Heart right ventricle (tissue), 16 donors: ENCODE measurements at regions of chr19 and their contacts with region 1.

Region 1: GRCh38 chr19:10478903-10479384 is 24.2 kb downstream of the KEAP1 start:
- DNase-seq: peak; percentile 88 to 94
- ATAC-seq: peak; percentile 93 to 99 (median 98)
- H3K4me3 ChIP-seq: peak overlapping the region in 9 of 10 donors; percentile 38 to 57 (median 45)
- H3K27ac ChIP-seq: peak overlapping the region in 5 of 10 donors; percentile 1 to 26 (median 20)
- H3K4me1 ChIP-seq: peaks cover 0 to 20% (median 6%) of the 10 kb centered on the region in 9 donors
- H3K27me3 ChIP-seq: no peaks in the 10 kb centered on the region
- CTCF ChIP-seq: peak; percentile 78 to 94 (median 86)

Region 2: DNA sequence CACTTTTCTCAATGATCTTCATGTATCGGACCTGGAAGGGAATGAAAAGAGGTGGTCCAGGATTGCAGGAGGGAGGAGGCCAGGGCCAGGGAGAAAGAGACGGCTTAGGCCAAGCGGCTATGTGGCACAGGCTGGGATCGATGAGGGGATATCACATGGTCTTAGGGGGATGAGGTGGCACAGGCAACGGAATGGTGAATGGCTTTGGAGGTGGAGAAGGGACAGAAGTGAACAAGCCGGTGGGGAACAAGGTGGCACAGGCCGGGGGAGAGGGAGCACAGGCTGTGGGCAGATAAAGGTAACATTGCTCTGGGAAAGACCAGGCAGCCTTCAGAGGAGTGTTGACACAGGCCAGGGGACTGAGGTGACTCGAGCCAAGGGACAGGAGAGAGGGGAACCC is 95.5 kb after region 1 on chr19:
- intact Hi-C with region 1: loop called in 2 of 10 experiments (anchors 2 to 5 kb)
- DNase-seq: no peak
- ATAC-seq: no peak
- H3K4me3 ChIP-seq: no peak overlapping the region
- H3K27ac ChIP-seq: no peak overlapping the region
- H3K4me1 ChIP-seq: peaks cover 2 to 14% (median 9%) of the 10 kb centered on the region in 9 donors
- H3K27me3 ChIP-seq: peaks cover 0 to 5% (median 0%) of the 10 kb centered on the region in 7 donors
- CTCF ChIP-seq: no peak